ENCODE measurements at regions of chr5 and their contacts with region 1.

Region 1: DNA sequence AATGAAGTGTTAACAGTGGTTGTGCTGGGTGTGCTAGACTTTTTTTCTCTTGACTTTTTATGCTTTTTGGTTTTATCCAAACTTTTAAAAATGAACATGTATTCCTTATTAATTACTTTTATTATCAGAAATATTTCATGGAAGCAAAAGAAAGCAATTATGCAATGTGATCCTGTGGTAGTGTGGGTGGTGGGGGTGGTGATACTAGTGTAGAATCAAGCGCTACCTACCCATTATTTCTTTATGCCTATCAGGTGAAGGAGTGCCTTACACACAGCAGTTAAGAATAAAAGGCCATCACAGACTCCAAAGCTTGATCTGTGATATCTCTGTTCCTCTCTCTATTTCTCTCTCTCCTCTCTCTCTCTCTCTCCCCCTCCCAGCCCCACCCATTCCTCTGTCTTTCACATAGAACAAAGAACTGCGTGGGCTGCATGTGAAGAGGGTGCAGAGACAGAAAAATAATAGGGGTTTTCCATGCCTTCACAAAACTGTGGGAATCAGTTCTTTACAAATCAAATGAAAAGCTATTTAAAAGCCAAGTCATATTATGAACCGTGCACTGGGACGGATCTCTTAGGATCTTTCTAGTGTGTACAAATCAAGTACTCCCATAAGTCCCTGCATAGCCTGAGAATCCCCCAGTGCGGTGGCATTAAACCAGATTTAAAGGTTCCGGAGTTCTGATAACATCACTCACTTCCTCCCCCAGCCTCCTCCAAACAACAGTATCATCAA is 351.2 kb downstream of the RAB3C start:
- DNase-seq: no peak
- H3K4me3 ChIP-seq: no peak overlapping the region
- H3K27ac ChIP-seq: no peak overlapping the region
- H3K4me1 ChIP-seq: no peaks in the 10 kb centered on the region
- H3K27me3 ChIP-seq: no peaks in the 10 kb centered on the region
- CTCF ChIP-seq: no peak
- POLR2A ChIP-seq: no peak

Region 2: GRCh38 chr5:58974083-58974482 is 40.0 kb after region 1 on chr5:
- intact Hi-C with region 1: loop called in 1 of 2 experiments (anchors 2 kb)
- DNase-seq: no peak
- H3K4me3 ChIP-seq: no peak overlapping the region
- H3K27ac ChIP-seq: no peak overlapping the region
- H3K4me1 ChIP-seq: no peaks in the 10 kb centered on the region
- H3K27me3 ChIP-seq: no peaks in the 10 kb centered on the region
- CTCF ChIP-seq: no peak
- POLR2A ChIP-seq: no peak

Measured in adrenal gland (tissue), 19 donors.